ENCODE measurements at regions of chr12 and their contacts with region 1.

Region 1: DNA sequence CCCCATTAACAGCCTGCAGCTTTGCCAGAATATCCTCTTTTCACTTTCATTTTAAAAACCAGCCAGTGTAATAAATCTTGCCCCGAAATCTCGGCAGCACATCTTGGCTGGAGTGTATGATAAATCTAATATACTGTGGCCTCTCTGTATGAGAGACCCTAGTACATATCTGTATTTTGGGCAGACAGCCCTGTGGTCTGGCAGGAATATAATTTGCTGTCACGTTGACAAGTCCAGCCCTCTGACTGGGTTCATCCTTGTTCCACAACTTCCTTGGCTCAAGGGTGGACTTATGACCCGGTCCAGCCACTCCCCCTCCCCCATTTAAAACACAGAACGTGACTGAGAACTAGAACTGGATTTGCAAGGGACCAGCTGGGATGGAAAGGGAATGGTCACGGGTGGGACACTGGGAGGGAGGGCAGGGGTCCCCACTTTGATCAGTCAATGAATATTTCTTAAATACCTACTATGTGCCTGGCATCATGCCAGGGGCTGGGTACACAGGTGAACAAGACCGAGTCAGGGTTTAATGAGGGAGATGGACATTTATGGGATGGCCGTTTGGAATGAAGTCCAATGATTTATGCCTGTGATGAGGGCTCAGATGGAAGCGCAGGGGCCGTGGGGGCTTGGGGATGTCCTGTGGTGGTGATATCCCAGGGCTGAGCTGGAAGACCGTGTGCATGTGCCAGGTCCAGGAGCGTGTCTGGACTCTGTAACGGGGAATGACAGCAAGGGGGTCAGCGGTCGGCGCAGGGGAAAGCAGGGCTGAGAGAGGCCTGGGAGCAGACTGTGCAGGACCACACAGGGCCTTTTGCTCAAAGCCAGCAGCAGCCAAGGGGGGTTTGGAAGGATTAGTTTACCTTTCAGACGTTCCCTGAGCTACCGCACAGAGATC is 190.5 kb downstream of the PHETA1 start:
- DNase-seq: no peak
- ATAC-seq: no peak
- H3K4me3 ChIP-seq: no peak overlapping the region
- H3K27ac ChIP-seq: no peak overlapping the region
- H3K4me1 ChIP-seq: no peaks in the 10 kb centered on the region
- H3K27me3 ChIP-seq: peaks cover 4% of the 10 kb centered on the region; the same call in 1 of the 2 replicates
- CTCF ChIP-seq: no peak

Region 2: GRCh38 chr12:110983806-110984205 is 194.6 kb before region 1 on chr12:
- CTCF ChIA-PET with region 1: interaction called, 12 read pairs
- POLR2A ChIA-PET with region 1: no interaction called
- in situ Hi-C with region 1: no loop called
- intact Hi-C with region 1: no loop called
- DNase-seq: no peak
- ATAC-seq: no peak
- H3K4me3 ChIP-seq: no peak overlapping the region
- H3K27ac ChIP-seq: no peak overlapping the region
- H3K4me1 ChIP-seq: no peaks in the 10 kb centered on the region
- H3K27me3 ChIP-seq: peaks cover 14% of the 10 kb centered on the region
- CTCF ChIP-seq: no peak

Measured in Panc1 (cell line).